ENCODE measurements at regions of chr15 and their contacts with region 1.

Region 1: DNA sequence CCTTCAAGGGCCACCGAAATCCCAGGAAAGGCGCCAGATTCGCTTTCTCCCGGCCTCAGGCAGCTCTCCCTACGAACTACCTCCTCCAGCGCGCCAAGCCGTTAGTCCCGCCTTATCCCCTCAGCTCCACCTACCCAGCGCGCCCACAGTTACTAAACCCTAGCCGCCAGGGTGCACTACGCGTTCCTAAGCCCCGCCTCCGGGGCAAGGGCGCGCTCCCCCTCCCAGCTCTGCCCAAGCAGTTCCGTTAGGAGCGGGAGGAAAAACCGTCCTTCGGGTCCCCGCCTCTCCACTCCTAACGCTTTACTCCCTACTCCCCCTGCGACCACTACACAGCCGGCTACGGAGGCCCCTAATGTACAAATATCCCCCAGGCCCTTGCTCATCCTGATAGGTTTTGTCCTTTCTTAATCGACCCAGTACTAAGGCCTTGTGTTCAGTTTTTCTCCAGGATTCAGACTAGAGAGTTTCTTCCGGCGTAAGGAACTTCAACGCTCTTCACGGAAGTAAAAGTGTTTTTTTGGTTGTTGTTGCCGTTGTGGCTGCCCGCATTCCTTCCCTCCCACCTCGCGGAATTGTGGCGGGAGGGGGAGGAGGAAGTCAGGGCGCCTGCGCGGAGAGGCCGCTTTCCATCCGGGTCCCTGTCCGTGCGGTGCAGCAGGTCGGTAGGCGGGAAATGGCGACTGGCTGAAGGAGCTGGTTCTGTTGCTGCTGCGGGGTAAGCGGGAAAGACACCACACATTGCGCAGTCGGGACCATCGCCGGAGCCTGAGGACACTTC is at the start of gene CTDSPL2:
- DNase-seq: peak; percentile 92 to 99
- H3K4me3 ChIP-seq: peak within 1 kb of the TSS; percentile 81 to 84
- H3K27ac ChIP-seq: peak within 1 kb of the TSS; percentile 97
- H3K4me1 ChIP-seq: peaks cover 0 to 11% of the 10 kb centered on the region in 2 donors
- H3K27me3 ChIP-seq: no peaks in the 10 kb centered on the region
- CTCF ChIP-seq: peak in 1 of 3 experiments; percentile 44
- total RNA-seq, gene CTDSPL2: 2.6 TPM

Region 2: GRCh38 chr15:44195151-44195740 is 231.9 kb before region 1 on chr15 and contains the start of gene FRMD5:
- intact Hi-C with region 1: loop called (anchors 5 kb)
- DNase-seq: peak; percentile 55 to 89
- H3K4me3 ChIP-seq: peak within 1 kb of the TSS; percentile 66 to 74
- H3K27ac ChIP-seq: no peak within 1 kb of the TSS
- H3K4me1 ChIP-seq: peaks cover 6 to 13% of the 10 kb centered on the region in 2 donors
- H3K27me3 ChIP-seq: no peaks in the 10 kb centered on the region
- CTCF ChIP-seq: peak in 2 of 3 experiments; percentile 29
- total RNA-seq, gene FRMD5: not detected

Region 3: GRCh38 chr15:44536962-44537734 is 110.0 kb after region 1 on chr15 and contains the start of gene EIF3J:
- intact Hi-C with region 1: loop called (anchors 1 kb)
- DNase-seq: peak; percentile 84 to 97
- H3K4me3 ChIP-seq: peak within 1 kb of the TSS; percentile 75 to 88
- H3K27ac ChIP-seq: peak within 1 kb of the TSS; percentile 96 to 98
- H3K4me1 ChIP-seq: peaks cover 8 to 33% of the 10 kb centered on the region in 2 donors
- H3K27me3 ChIP-seq: no peaks in the 10 kb centered on the region
- CTCF ChIP-seq: no peak
- total RNA-seq, gene EIF3J: 22.8 TPM

Region 4: GRCh38 chr15:44711356-44712107 is 284.4 kb after region 1 on chr15 and contains the start of gene B2M:
- intact Hi-C with region 1: loop called (anchors 5 kb)
- DNase-seq: peak; percentile 90 to 98
- H3K4me3 ChIP-seq: peak within 1 kb of the TSS; percentile 87 to 90
- H3K27ac ChIP-seq: peak within 1 kb of the TSS; percentile 97 to 99
- H3K4me1 ChIP-seq: peaks cover 4 to 15% of the 10 kb centered on the region in 2 donors
- H3K27me3 ChIP-seq: no peaks in the 10 kb centered on the region
- CTCF ChIP-seq: no peak
- total RNA-seq, gene B2M: 3,395 TPM

Measured in ascending aorta (tissue), 2 donors.